ENCODE measurements at regions of chr16 and their contacts with region 1.

Region 1: GRCh38 chr16:56625140-56625942 is at the start of gene MT1E:
- DNase-seq: peak in 4 of 5 donors; percentile 28 to 76 (median 44)
- H3K4me3 ChIP-seq: peak within 1 kb of the TSS; percentile 76
- H3K4me3 Mint-ChIP-seq: peak within 1 kb of the TSS; percentile 89 to 94 (median 92)
- H3K27ac ChIP-seq: peak within 1 kb of the TSS; percentile 24
- H3K27ac Mint-ChIP-seq: peak within 1 kb of the TSS; percentile 68 to 96 (median 86)
- H3K4me1 ChIP-seq: peaks cover 13% of the 10 kb centered on the region
- H3K4me1 Mint-ChIP-seq: peaks cover 14 to 16% (median 15%) of the 10 kb centered on the region in 3 donors
- H3K27me3 ChIP-seq: peaks cover 7% of the 10 kb centered on the region
- H3K27me3 Mint-ChIP-seq: peaks cover 4 to 7% of the 10 kb centered on the region in 2 donors
- total RNA-seq, gene MT1E: 153 to 163 TPM

Region 2: GRCh38 chr16:56608043-56608875 is 17.1 kb before region 1 on chr16 and contains the start of gene MT2A:
- CTCF ChIA-PET with region 1: interaction called, 10 read pairs
- POLR2A ChIA-PET with region 1: interaction called, 5 read pairs
- DNase-seq: peak; percentile 78 to 92 (median 83)
- H3K4me3 ChIP-seq: peak within 1 kb of the TSS; percentile 98
- H3K4me3 Mint-ChIP-seq: peak within 1 kb of the TSS; percentile 89 to 99 (median 95)
- H3K27ac ChIP-seq: peak within 1 kb of the TSS; percentile 64
- H3K27ac Mint-ChIP-seq: peak within 1 kb of the TSS; percentile 82 to 98 (median 96)
- H3K4me1 ChIP-seq: peaks cover 39% of the 10 kb centered on the region
- H3K4me1 Mint-ChIP-seq: peaks cover 46 to 51% (median 48%) of the 10 kb centered on the region in 3 donors
- H3K27me3 ChIP-seq: no peaks in the 10 kb centered on the region
- H3K27me3 Mint-ChIP-seq: peaks cover 0 to 2% of the 10 kb centered on the region in 2 donors
- total RNA-seq, gene MT2A: 285 to 349 TPM

Region 3: DNA sequence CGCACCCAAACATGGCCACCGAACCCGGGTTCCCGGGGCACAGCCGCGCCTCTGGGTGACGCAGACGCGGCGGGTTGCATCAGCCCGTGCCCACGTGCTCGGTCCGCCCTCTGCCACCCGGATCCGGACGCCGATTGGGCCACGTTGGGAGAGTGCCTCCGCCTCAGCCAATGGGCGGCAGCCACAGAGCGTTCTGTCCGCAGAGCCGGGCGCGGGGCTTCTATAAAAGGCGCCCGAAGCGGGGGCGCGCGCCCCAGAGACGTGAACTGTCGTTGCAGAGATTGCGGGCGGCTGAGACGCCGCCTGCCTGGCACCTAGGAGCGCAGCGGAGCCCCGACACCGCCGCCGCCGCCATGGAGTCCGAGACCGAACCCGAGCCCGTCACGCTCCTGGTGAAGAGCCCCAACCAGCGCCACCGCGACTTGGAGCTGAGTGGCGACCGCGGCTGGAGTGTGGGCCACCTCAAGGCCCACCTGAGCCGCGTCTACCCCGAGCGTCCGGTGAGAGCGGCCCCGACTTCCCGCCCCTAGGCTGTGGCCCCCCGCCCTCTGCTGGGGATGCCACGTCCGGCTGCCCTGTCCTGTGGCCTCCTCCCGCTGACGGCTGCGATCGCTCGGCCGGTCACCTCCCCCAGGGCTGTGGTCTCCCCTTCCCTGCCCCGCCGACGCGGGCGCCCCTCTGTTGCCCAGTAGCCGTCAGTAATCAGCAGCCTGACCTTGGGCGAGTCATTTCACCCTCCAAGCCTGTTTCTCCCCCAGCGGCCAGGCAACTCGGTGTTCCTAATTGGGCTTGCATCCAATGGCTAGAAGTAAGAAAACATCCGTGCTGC is 306.8 kb after region 1 on chr16 and contains the start of gene HERPUD1:
- CTCF ChIA-PET with region 1: no interaction called
- POLR2A ChIA-PET with region 1: no interaction called
- DNase-seq: peak; percentile 98 to 99 (median 99)
- H3K4me3 ChIP-seq: peak within 1 kb of the TSS; percentile 69
- H3K4me3 Mint-ChIP-seq: peak within 1 kb of the TSS; percentile 95 to 100 (median 98)
- H3K27ac ChIP-seq: peak within 1 kb of the TSS; percentile 95
- H3K27ac Mint-ChIP-seq: peak within 1 kb of the TSS; percentile 95 to 99 (median 98)
- H3K4me1 ChIP-seq: peaks cover 47% of the 10 kb centered on the region
- H3K4me1 Mint-ChIP-seq: peaks cover 34 to 48% (median 47%) of the 10 kb centered on the region in 3 donors
- H3K27me3 ChIP-seq: no peaks in the 10 kb centered on the region
- H3K27me3 Mint-ChIP-seq: peaks cover 0 to 5% of the 10 kb centered on the region in 2 donors
- total RNA-seq, gene HERPUD1: 162 to 176 TPM

Measured in CD8-positive, alpha-beta memory T cell (primary cell).